K562 (cell line): ENCODE measurements at regions of chr2 and their contacts with region 1.

Region 1: GRCh38 chr2:204145263-204145751 is 208.7 kb downstream of the ICOS start:
- DNase-seq: peak; percentile 47 to 69 (median 64)
- ATAC-seq: peak; percentile 99
- H3K4me3 ChIP-seq: peak overlapping the region; percentile 14; the same call in 1 of the 2 replicates
- H3K27ac ChIP-seq: no peak overlapping the region
- H3K4me1 ChIP-seq: no peaks in the 10 kb centered on the region; a peak in 1 of 5 replicates
- H3K27me3 ChIP-seq: no peaks in the 10 kb centered on the region
- CTCF ChIP-seq: peak; percentile 76 to 81 (median 77)
- EP300 ChIP-seq: no peak
- POLR2A ChIP-seq: no peak
- RAD21 ChIP-seq: peak; percentile 75 to 78

Region 2: DNA sequence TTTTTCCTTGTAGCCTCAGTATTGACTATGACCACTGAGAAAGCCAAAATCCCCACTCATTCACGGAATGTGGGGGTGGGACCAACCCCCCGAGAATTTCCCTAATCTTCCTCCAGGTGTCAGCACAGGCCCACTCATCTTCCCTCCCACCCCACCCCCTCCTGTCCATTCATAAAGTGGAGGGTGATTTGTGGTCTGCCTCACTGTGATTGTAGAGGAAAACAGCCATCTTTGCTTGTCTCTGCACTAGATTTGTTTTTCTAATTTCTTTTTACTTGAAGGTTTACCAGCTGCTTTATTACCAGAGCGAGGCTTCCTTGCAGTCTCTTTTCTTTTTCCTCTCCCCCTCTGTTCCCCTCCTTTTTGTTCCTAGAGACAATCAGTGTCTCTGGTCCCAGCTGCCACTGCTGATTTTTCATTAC is 37.0 kb before region 1 on chr2:
- CTCF ChIA-PET with region 1: no interaction called
- POLR2A ChIA-PET with region 1: no interaction called
- in situ Hi-C with region 1: no loop called
- intact Hi-C with region 1: loop called (anchors 1 kb)
- DNase-seq: peak; percentile 42 to 72 (median 66)
- ATAC-seq: peak; percentile 81
- H3K4me3 ChIP-seq: no peak overlapping the region
- H3K27ac ChIP-seq: no peak overlapping the region
- H3K4me1 ChIP-seq: no peaks in the 10 kb centered on the region
- H3K27me3 ChIP-seq: peaks cover 0 to 11% of the 10 kb centered on the region in 2 experiments; a peak in 2 of 5 replicates
- CTCF ChIP-seq: peak; percentile 32 to 37 (median 36); a peak in 3 of 6 replicates
- EP300 ChIP-seq: no peak
- POLR2A ChIP-seq: no peak
- RAD21 ChIP-seq: peak in 1 of 2 experiments; percentile 33; a peak in 2 of 4 replicates

Region 3: GRCh38 chr2:204177977-204178540 is 32.8 kb after region 1 on chr2:
- CTCF ChIA-PET with region 1: no interaction called
- POLR2A ChIA-PET with region 1: no interaction called
- in situ Hi-C with region 1: no loop called
- intact Hi-C with region 1: loop called (anchors 2 kb)
- DNase-seq: peak; percentile 16 to 35 (median 22)
- ATAC-seq: peak; percentile 80
- H3K4me3 ChIP-seq: no peak overlapping the region
- H3K27ac ChIP-seq: no peak overlapping the region
- H3K4me1 ChIP-seq: no peaks in the 10 kb centered on the region
- H3K27me3 ChIP-seq: no peaks in the 10 kb centered on the region
- CTCF ChIP-seq: peak; percentile 44 to 54 (median 48); a peak in 5 of 6 replicates
- EP300 ChIP-seq: no peak
- POLR2A ChIP-seq: no peak
- RAD21 ChIP-seq: peak in 1 of 2 experiments; percentile 48; a peak in 3 of 4 replicates

Region 4: DNA sequence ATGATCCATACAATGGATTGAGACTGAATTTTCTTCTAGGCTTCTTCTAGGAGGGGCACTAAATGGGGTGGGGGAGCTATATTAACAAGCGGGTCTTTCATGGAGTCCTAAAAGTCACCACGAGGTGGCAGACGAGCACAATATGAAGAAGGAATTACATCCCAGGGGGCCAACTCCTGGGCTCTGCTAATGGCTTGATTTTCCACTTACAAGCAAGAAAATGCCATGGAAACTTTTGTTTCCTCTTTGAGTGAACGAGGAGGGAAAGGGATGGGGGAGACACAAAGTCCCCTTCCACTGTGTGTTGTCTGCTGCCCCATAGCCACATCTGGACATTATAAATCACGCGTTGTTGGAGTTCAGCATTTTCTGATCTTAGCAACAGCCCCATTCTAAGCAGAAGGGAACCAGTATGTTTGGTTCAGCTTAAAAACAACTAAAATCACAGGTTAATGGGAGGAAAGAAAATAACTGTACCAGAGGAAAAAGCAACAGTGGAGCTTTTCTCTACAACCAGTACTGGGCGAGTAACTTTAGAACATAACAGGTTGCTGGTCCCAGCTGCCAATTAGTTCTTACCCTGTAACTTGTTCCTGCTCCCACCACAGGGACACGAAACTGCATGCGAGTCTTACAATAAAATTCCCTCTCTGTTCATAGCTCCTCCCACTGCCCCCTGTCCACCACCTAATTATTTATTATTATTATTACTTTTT is 115.0 kb after region 1 on chr2:
- CTCF ChIA-PET with region 1: no interaction called
- POLR2A ChIA-PET with region 1: no interaction called
- in situ Hi-C with region 1: no loop called
- intact Hi-C with region 1: loop called (anchors 1 kb)
- DNase-seq: peak; percentile 62 to 72 (median 67)
- ATAC-seq: peak; percentile 89
- H3K4me3 ChIP-seq: no peak overlapping the region
- H3K27ac ChIP-seq: no peak overlapping the region
- H3K4me1 ChIP-seq: no peaks in the 10 kb centered on the region
- H3K27me3 ChIP-seq: peaks cover 0 to 7% of the 10 kb centered on the region in 2 experiments; a peak in 2 of 5 replicates
- CTCF ChIP-seq: peak; percentile 66 to 88 (median 77)
- EP300 ChIP-seq: no peak
- POLR2A ChIP-seq: no peak
- RAD21 ChIP-seq: peak; percentile 66 to 71

Region 5: GRCh38 chr2:204272089-204272488 is 126.8 kb after region 1 on chr2:
- CTCF ChIA-PET with region 1: no interaction called
- POLR2A ChIA-PET with region 1: no interaction called
- in situ Hi-C with region 1: no loop called
- intact Hi-C with region 1: no loop called
- DNase-seq: no peak
- ATAC-seq: no peak
- H3K4me3 ChIP-seq: no peak overlapping the region
- H3K27ac ChIP-seq: no peak overlapping the region
- H3K4me1 ChIP-seq: no peaks in the 10 kb centered on the region
- H3K27me3 ChIP-seq: no peaks in the 10 kb centered on the region
- CTCF ChIP-seq: no peak
- EP300 ChIP-seq: no peak
- POLR2A ChIP-seq: no peak
- RAD21 ChIP-seq: no peak